Mammary epithelial cell (primary cell): ENCODE measurements at regions of chr11 and their contacts with region 1.

Region 1: DNA sequence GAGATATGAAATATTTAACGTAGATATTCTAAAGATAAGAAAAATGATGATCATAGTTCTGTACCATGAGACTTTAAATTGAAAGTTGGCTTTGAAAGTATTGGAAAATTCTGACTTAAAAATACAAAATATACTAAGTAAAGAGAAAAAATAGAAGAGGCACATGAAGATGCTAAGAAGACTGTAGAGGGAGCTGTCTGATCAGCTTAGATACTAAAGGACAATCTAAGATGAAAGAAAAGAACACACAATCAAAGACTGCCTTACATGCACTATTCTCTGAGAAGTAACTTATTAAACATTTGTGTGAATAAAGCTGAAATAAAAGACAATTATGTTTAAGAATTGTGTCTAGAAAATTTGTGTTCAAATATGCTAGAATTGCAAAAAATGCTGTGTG is 55.1 kb downstream of the RBMXL2 start:
- DNase-seq: peak; percentile 6
- H3K4me3 ChIP-seq: no peak overlapping the region
- H3K27ac ChIP-seq: no peak overlapping the region
- H3K4me1 ChIP-seq: no peaks in the 10 kb centered on the region
- H3K27me3 ChIP-seq: no peaks in the 10 kb centered on the region
- CTCF ChIP-seq: peak; percentile 43 to 51

Region 2: GRCh38 chr11:7278314-7278917 is 134.5 kb after region 1 on chr11:
- CTCF ChIA-PET with region 1: interaction called, 3 read pairs
- dilution Hi-C with region 1: no loop called
- in situ Hi-C with region 1: no loop called
- intact Hi-C with region 1: loop called (anchors 1 kb)
- DNase-seq: peak; percentile 15
- H3K4me3 ChIP-seq: no peak overlapping the region
- H3K27ac ChIP-seq: no peak overlapping the region
- H3K4me1 ChIP-seq: peaks cover 5% of the 10 kb centered on the region
- H3K27me3 ChIP-seq: no peaks in the 10 kb centered on the region
- CTCF ChIP-seq: peak; percentile 68 to 78